IMR-90 (cell line): ENCODE measurements at regions of chr9 and their contacts with region 1.

Region 1: GRCh38 chr9:108761655-108762347 is 94.0 kb downstream of the ACTL7B start:
- DNase-seq: peak; percentile 51
- ATAC-seq: peak; percentile 98
- H3K4me3 ChIP-seq: no peak overlapping the region
- H3K27ac ChIP-seq: no peak overlapping the region
- H3K4me1 ChIP-seq: no peaks in the 10 kb centered on the region
- H3K27me3 ChIP-seq: peaks cover 11% of the 10 kb centered on the region; the same call in 1 of the 2 replicates
- CTCF ChIP-seq: peak; percentile 89
- POLR2A ChIP-seq: no peak
- RAD21 ChIP-seq: peak; percentile 86

Region 2: GRCh38 chr9:107137495-107138202 is 1624.2 kb before region 1 on chr9:
- CTCF ChIA-PET with region 1: no interaction called
- POLR2A ChIA-PET with region 1: no interaction called
- dilution Hi-C with region 1: no loop called
- in situ Hi-C with region 1: loop called (anchors 25 kb)
- intact Hi-C with region 1: no loop called
- DNase-seq: peak; percentile 33
- ATAC-seq: peak; percentile 79
- H3K4me3 ChIP-seq: no peak overlapping the region
- H3K27ac ChIP-seq: no peak overlapping the region
- H3K4me1 ChIP-seq: no peaks in the 10 kb centered on the region
- H3K27me3 ChIP-seq: peaks cover 25% of the 10 kb centered on the region
- CTCF ChIP-seq: peak; percentile 67
- POLR2A ChIP-seq: no peak
- RAD21 ChIP-seq: peak; percentile 65

Region 3: DNA sequence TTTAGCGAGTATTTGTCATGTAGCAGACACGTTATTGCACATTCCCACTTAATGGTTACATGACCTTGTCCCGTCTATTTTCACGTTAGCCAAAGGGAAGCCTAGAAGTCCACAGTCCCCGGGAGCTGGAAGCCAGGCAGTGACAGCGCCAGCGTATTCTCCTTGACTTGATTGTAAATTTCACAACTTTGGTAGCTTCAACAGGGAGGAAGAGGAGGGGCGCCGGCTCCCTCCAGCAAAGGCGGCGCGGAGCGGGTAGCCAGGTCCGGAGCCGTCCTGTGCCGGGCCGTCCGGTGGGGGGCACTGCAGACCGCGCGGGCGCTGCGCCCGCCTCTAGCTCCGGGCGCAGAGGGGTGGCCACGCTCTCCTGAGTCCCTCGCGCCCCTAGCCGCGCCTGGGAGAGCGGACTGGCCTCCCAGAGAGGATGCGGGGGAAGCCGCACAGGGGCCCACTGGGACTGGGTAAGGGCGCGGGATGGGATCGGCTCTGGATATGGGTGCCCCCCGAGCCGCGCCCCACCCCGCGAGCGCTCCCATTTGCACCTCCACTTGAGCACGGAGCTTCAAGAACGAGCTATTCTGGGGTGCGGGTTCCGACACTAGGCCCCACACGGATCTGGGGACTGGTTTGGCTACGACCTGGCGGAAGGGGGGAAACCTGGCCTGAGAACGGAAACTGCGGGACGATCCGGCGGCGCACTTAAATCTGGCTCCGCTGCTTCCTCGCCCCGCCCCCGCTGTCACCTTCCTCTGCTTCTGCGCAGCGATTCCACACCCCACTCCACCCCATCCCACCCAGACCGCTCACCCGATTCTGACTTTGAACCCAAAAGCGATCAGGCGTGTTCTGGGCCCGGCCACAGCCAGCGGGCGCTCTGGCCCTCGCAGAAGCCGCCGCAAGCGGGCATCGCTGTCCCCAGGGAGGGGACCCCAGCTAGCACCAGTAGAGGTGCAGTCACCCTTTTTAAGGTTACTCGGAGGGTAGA is 1296.0 kb before region 1 on chr9:
- CTCF ChIA-PET with region 1: interaction called, 6 read pairs
- POLR2A ChIA-PET with region 1: no interaction called
- dilution Hi-C with region 1: no loop called
- in situ Hi-C with region 1: loop called (anchors 5 kb)
- intact Hi-C with region 1: loop called (anchors 1 kb)
- DNase-seq: peak; percentile 33
- ATAC-seq: peak; percentile 99
- H3K4me3 ChIP-seq: peak overlapping the region; percentile 48
- H3K27ac ChIP-seq: no peak overlapping the region
- H3K4me1 ChIP-seq: no peaks in the 10 kb centered on the region
- H3K27me3 ChIP-seq: peaks cover 4% of the 10 kb centered on the region
- CTCF ChIP-seq: peak; percentile 83
- POLR2A ChIP-seq: no peak
- RAD21 ChIP-seq: peak; percentile 85

Region 4: GRCh38 chr9:107484117-107484723 is 1277.6 kb before region 1 on chr9:
- CTCF ChIA-PET with region 1: no interaction called
- POLR2A ChIA-PET with region 1: no interaction called
- dilution Hi-C with region 1: no loop called
- in situ Hi-C with region 1: no loop called
- intact Hi-C with region 1: loop called (anchors 1 kb)
- DNase-seq: peak; percentile 81
- ATAC-seq: peak; percentile 74
- H3K4me3 ChIP-seq: no peak overlapping the region
- H3K27ac ChIP-seq: no peak overlapping the region
- H3K4me1 ChIP-seq: peaks cover 2% of the 10 kb centered on the region
- H3K27me3 ChIP-seq: no peaks in the 10 kb centered on the region
- CTCF ChIP-seq: peak; percentile 66
- POLR2A ChIP-seq: peak; percentile 82
- RAD21 ChIP-seq: peak; percentile 78

Region 5: GRCh38 chr9:107874591-107875369 is 887.0 kb before region 1 on chr9:
- CTCF ChIA-PET with region 1: no interaction called
- POLR2A ChIA-PET with region 1: no interaction called
- dilution Hi-C with region 1: no loop called
- in situ Hi-C with region 1: no loop called
- intact Hi-C with region 1: loop called (anchors 10 kb)
- DNase-seq: no peak
- ATAC-seq: peak; percentile 29; the same call in 1 of the 2 replicates
- H3K4me3 ChIP-seq: no peak overlapping the region
- H3K27ac ChIP-seq: no peak overlapping the region
- H3K4me1 ChIP-seq: no peaks in the 10 kb centered on the region
- H3K27me3 ChIP-seq: no peaks in the 10 kb centered on the region; the same call in 1 of the 2 replicates
- CTCF ChIP-seq: no peak
- POLR2A ChIP-seq: no peak
- RAD21 ChIP-seq: no peak

Region 6: GRCh38 chr9:108710424-108710823 is 51.4 kb before region 1 on chr9:
- CTCF ChIA-PET with region 1: no interaction called
- POLR2A ChIA-PET with region 1: no interaction called
- dilution Hi-C with region 1: no loop called
- in situ Hi-C with region 1: no loop called
- intact Hi-C with region 1: no loop called
- DNase-seq: no peak
- ATAC-seq: no peak
- H3K4me3 ChIP-seq: no peak overlapping the region
- H3K27ac ChIP-seq: no peak overlapping the region
- H3K4me1 ChIP-seq: no peaks in the 10 kb centered on the region
- H3K27me3 ChIP-seq: no peaks in the 10 kb centered on the region; the same call in 1 of the 2 replicates
- CTCF ChIP-seq: no peak
- POLR2A ChIP-seq: no peak
- RAD21 ChIP-seq: no peak

Region 7: GRCh38 chr9:109469646-109470358 is 708.0 kb after region 1 on chr9:
- CTCF ChIA-PET with region 1: no interaction called
- POLR2A ChIA-PET with region 1: no interaction called
- dilution Hi-C with region 1: no loop called
- in situ Hi-C with region 1: no loop called
- intact Hi-C with region 1: no loop called
- DNase-seq: peak; percentile 80
- ATAC-seq: peak; percentile 100
- H3K4me3 ChIP-seq: no peak overlapping the region
- H3K27ac ChIP-seq: no peak overlapping the region
- H3K4me1 ChIP-seq: no peaks in the 10 kb centered on the region
- H3K27me3 ChIP-seq: peaks cover 2% of the 10 kb centered on the region
- CTCF ChIP-seq: peak; percentile 91
- POLR2A ChIP-seq: no peak
- RAD21 ChIP-seq: peak; percentile 87